Activated B cell treated with CpG ODN at 0.5 μM for 24 hours (primary cell): ENCODE measurements at regions of chr13 and their contacts with region 1.

Region 1: DNA sequence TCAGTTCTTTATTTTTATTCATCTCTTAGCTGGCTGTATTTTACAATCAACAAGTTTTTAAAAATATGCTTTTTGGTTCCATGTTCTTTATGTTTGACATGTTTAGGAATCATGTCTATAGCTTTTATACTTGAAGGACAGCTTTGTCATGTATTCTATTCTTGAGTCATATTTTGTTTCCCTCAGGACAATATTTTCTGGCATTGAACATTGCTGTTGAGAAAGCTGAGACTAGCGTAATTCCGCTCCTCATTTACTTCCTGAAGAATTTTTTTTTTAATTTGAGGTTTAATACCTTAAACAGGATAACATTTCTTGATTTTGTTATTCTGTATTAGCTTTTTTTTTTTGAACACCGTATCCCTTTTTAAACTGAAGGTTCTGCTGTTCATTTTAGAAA is 53.2 kb downstream of the RB1 start:
- DNase-seq: no peak
- ATAC-seq: no peak
- H3K4me3 Mint-ChIP-seq: no peak overlapping the region
- H3K27ac Mint-ChIP-seq: no peak overlapping the region
- H3K4me1 Mint-ChIP-seq: no peaks in the 10 kb centered on the region
- H3K27me3 Mint-ChIP-seq: no peaks in the 10 kb centered on the region
- CTCF ChIP-seq: no peak

Region 2: GRCh38 chr13:46934749-46935148 is 1422.0 kb before region 1 on chr13:
- CTCF ChIA-PET with region 1: no interaction called
- POLR2A ChIA-PET with region 1: no interaction called
- intact Hi-C with region 1: loop called (anchors 5 kb)
- DNase-seq: no peak
- ATAC-seq: no peak
- H3K4me3 Mint-ChIP-seq: no peak overlapping the region
- H3K27ac Mint-ChIP-seq: no peak overlapping the region
- H3K4me1 Mint-ChIP-seq: no peaks in the 10 kb centered on the region
- H3K27me3 Mint-ChIP-seq: peaks cover 8% of the 10 kb centered on the region
- CTCF ChIP-seq: no peak

Region 3: GRCh38 chr13:48000778-48001628 is 355.7 kb before region 1 on chr13 and contains the start of gene SUCLA2:
- CTCF ChIA-PET with region 1: no interaction called
- POLR2A ChIA-PET with region 1: no interaction called
- intact Hi-C with region 1: no loop called
- DNase-seq: peak; percentile 88
- ATAC-seq: peak; percentile 100
- H3K4me3 Mint-ChIP-seq: peak within 1 kb of the TSS; percentile 95
- H3K27ac Mint-ChIP-seq: peak within 1 kb of the TSS; percentile 74
- H3K4me1 Mint-ChIP-seq: peaks cover 28% of the 10 kb centered on the region
- H3K27me3 Mint-ChIP-seq: no peaks in the 10 kb centered on the region
- CTCF ChIP-seq: no peak
- total RNA-seq, gene SUCLA2: 32.1 and 35.8 TPM in 2 replicates

Region 4: GRCh38 chr13:48344264-48344663 is 12.5 kb before region 1 on chr13:
- CTCF ChIA-PET with region 1: no interaction called
- POLR2A ChIA-PET with region 1: no interaction called
- intact Hi-C with region 1: loop called (anchors 2 kb)
- DNase-seq: no peak
- ATAC-seq: no peak
- H3K4me3 Mint-ChIP-seq: no peak overlapping the region
- H3K27ac Mint-ChIP-seq: no peak overlapping the region
- H3K4me1 Mint-ChIP-seq: no peaks in the 10 kb centered on the region
- H3K27me3 Mint-ChIP-seq: no peaks in the 10 kb centered on the region
- CTCF ChIP-seq: no peak